ENCODE measurements at regions of chr20 and their contacts with region 1.

Region 1: GRCh38 chr20:6029538-6029937 is 24.3 kb downstream of the LRRN4 start:
- DNase-seq: no peak
- ATAC-seq: no peak
- H3K4me3 ChIP-seq: no peak overlapping the region
- H3K4me3 Mint-ChIP-seq: no peak overlapping the region
- H3K27ac ChIP-seq: no peak overlapping the region
- H3K27ac Mint-ChIP-seq: peak overlapping the region in 1 of 2 donors; percentile 8
- H3K4me1 ChIP-seq: peaks cover 7 to 14% of the 10 kb centered on the region in 2 experiments
- H3K4me1 Mint-ChIP-seq: peaks cover 33 to 42% (median 42%) of the 10 kb centered on the region in 3 donors
- H3K27me3 ChIP-seq: no peaks in the 10 kb centered on the region
- H3K27me3 Mint-ChIP-seq: no peaks in the 10 kb centered on the region

Region 2: GRCh38 chr20:4937397-4938319 is 1091.9 kb before region 1 on chr20:
- CTCF ChIA-PET with region 1: no interaction called
- POLR2A ChIA-PET with region 1: no interaction called
- DNase-seq: no peak
- ATAC-seq: no peak
- H3K4me3 ChIP-seq: no peak overlapping the region
- H3K4me3 Mint-ChIP-seq: no peak overlapping the region
- H3K27ac ChIP-seq: no peak overlapping the region
- H3K27ac Mint-ChIP-seq: no peak overlapping the region
- H3K4me1 ChIP-seq: no peaks in the 10 kb centered on the region
- H3K4me1 Mint-ChIP-seq: peaks cover 13 to 16% (median 15%) of the 10 kb centered on the region in 3 donors
- H3K27me3 ChIP-seq: no peaks in the 10 kb centered on the region
- H3K27me3 Mint-ChIP-seq: no peaks in the 10 kb centered on the region

Region 3: DNA sequence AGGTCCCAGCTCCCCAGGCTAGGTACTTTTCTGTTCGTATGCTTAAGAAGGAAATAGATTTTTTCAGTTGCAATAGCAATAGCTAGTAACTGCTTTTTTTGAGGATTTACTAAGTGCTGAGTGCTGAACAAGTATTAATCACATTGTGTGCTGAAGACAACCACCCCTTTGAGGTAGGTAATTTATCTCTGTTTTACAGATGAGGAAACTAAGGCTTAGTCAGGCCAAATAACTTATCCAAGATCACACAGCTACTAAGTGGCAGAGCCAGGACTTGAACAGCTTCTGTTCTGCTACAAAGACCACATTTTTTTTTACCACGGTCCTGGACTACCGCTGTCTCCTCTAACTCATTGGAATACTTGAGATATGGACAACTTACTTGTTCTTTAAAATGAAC is 15.5 kb before region 1 on chr20:
- CTCF ChIA-PET with region 1: no interaction called
- POLR2A ChIA-PET with region 1: no interaction called
- DNase-seq: no peak
- ATAC-seq: no peak
- H3K4me3 ChIP-seq: no peak overlapping the region
- H3K4me3 Mint-ChIP-seq: no peak overlapping the region
- H3K27ac ChIP-seq: no peak overlapping the region
- H3K27ac Mint-ChIP-seq: peak overlapping the region in 1 of 2 donors; percentile 74
- H3K4me1 ChIP-seq: peaks cover 0 to 2% of the 10 kb centered on the region in 2 experiments
- H3K4me1 Mint-ChIP-seq: peaks cover 52 to 55% (median 53%) of the 10 kb centered on the region in 3 donors
- H3K27me3 ChIP-seq: no peaks in the 10 kb centered on the region
- H3K27me3 Mint-ChIP-seq: no peaks in the 10 kb centered on the region

Region 4: GRCh38 chr20:6134592-6134991 is 105.1 kb after region 1 on chr20:
- CTCF ChIA-PET with region 1: no interaction called
- POLR2A ChIA-PET with region 1: interaction called in 1 of 2 experiments, 11 read pairs
- DNase-seq: no peak
- ATAC-seq: no peak
- H3K4me3 ChIP-seq: no peak overlapping the region
- H3K4me3 Mint-ChIP-seq: no peak overlapping the region
- H3K27ac ChIP-seq: no peak overlapping the region
- H3K27ac Mint-ChIP-seq: no peak overlapping the region
- H3K4me1 ChIP-seq: no peaks in the 10 kb centered on the region
- H3K4me1 Mint-ChIP-seq: no peaks in the 10 kb centered on the region
- H3K27me3 ChIP-seq: peaks cover 0 to 11% of the 10 kb centered on the region in 2 experiments
- H3K27me3 Mint-ChIP-seq: peaks cover 28 to 34% of the 10 kb centered on the region in 2 donors

Region 5: DNA sequence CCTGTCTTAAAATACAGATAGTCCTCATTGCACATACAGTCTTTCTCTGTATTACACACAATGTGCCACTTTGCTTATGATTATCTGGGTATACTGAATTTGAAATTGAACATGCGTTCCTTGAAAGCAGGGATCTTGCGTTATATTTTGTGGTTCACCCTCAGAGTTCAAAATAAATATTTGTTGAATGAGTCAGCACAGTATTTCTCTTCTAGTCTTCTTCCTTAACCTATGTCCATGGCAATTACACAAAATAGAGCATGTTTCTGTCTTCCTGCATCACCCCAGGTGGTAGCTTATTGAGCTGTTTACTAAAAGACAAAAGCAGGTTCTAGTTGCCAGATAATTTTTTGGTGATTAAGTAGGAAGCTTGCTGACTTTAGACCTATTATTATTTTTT is 366.2 kb after region 1 on chr20:
- CTCF ChIA-PET with region 1: no interaction called
- POLR2A ChIA-PET with region 1: no interaction called
- DNase-seq: no peak
- ATAC-seq: no peak
- H3K4me3 ChIP-seq: no peak overlapping the region
- H3K4me3 Mint-ChIP-seq: no peak overlapping the region
- H3K27ac ChIP-seq: no peak overlapping the region
- H3K27ac Mint-ChIP-seq: no peak overlapping the region
- H3K4me1 ChIP-seq: no peaks in the 10 kb centered on the region
- H3K4me1 Mint-ChIP-seq: no peaks in the 10 kb centered on the region
- H3K27me3 ChIP-seq: no peaks in the 10 kb centered on the region
- H3K27me3 Mint-ChIP-seq: no peaks in the 10 kb centered on the region